CD8-positive, alpha-beta T cell (primary cell): ENCODE measurements at regions of chr9 and their contacts with region 1.

Region 1: GRCh38 chr9:132944302-132945185 is at the start of gene TSC1:
- DNase-seq: peak; percentile 96 to 99 (median 98)
- ATAC-seq: peak; percentile 83
- H3K4me3 ChIP-seq: peak within 1 kb of the TSS; percentile 98 to 99
- H3K4me3 Mint-ChIP-seq: peak within 1 kb of the TSS; percentile 97
- H3K27ac ChIP-seq: peak within 1 kb of the TSS; percentile 90 to 100
- H3K27ac Mint-ChIP-seq: peak within 1 kb of the TSS; percentile 100
- H3K4me1 ChIP-seq: peaks cover 17% of the 10 kb centered on the region
- H3K4me1 Mint-ChIP-seq: peaks cover 29% of the 10 kb centered on the region
- H3K27me3 ChIP-seq: no peaks in the 10 kb centered on the region
- H3K27me3 Mint-ChIP-seq: no peaks in the 10 kb centered on the region
- CTCF ChIP-seq: no peak
- total RNA-seq, gene TSC1: 45.6 to 51.1 TPM

Region 2: GRCh38 chr9:132804576-132805295 is 139.8 kb before region 1 on chr9:
- CTCF ChIA-PET with region 1: no interaction called
- POLR2A ChIA-PET with region 1: no interaction called
- intact Hi-C with region 1: no loop called
- DNase-seq: peak in 2 of 9 experiments; percentile 46 to 66
- ATAC-seq: no peak
- H3K4me3 ChIP-seq: no peak overlapping the region
- H3K4me3 Mint-ChIP-seq: no peak overlapping the region
- H3K27ac ChIP-seq: no peak overlapping the region
- H3K27ac Mint-ChIP-seq: no peak overlapping the region
- H3K4me1 ChIP-seq: no peaks in the 10 kb centered on the region
- H3K4me1 Mint-ChIP-seq: peaks cover 9% of the 10 kb centered on the region
- H3K27me3 ChIP-seq: peaks cover under 1 to 4% of the 10 kb centered on the region in 2 experiments
- H3K27me3 Mint-ChIP-seq: peaks cover 24% of the 10 kb centered on the region
- CTCF ChIP-seq: no peak

Region 3: GRCh38 chr9:132840980-132841379 is 103.6 kb before region 1 on chr9:
- CTCF ChIA-PET with region 1: no interaction called
- POLR2A ChIA-PET with region 1: no interaction called
- intact Hi-C with region 1: no loop called
- DNase-seq: no peak
- ATAC-seq: no peak
- H3K4me3 ChIP-seq: no peak overlapping the region
- H3K4me3 Mint-ChIP-seq: no peak overlapping the region
- H3K27ac ChIP-seq: no peak overlapping the region
- H3K27ac Mint-ChIP-seq: no peak overlapping the region
- H3K4me1 ChIP-seq: no peaks in the 10 kb centered on the region
- H3K4me1 Mint-ChIP-seq: no peaks in the 10 kb centered on the region
- H3K27me3 ChIP-seq: no peaks in the 10 kb centered on the region
- H3K27me3 Mint-ChIP-seq: no peaks in the 10 kb centered on the region
- CTCF ChIP-seq: no peak

Region 4: GRCh38 chr9:132877824-132878694 is 66.5 kb before region 1 on chr9 and contains the start of gene AK8:
- CTCF ChIA-PET with region 1: no interaction called
- POLR2A ChIA-PET with region 1: interaction called, 8 read pairs
- intact Hi-C with region 1: loop called in 1 of 2 experiments (anchors 1 kb)
- DNase-seq: peak; percentile 55 to 88 (median 73)
- ATAC-seq: peak; percentile 88
- H3K4me3 ChIP-seq: peak within 1 kb of the TSS; percentile 96 to 98
- H3K4me3 Mint-ChIP-seq: peak within 1 kb of the TSS; percentile 81
- H3K27ac ChIP-seq: peak within 1 kb of the TSS; percentile 63 to 73
- H3K27ac Mint-ChIP-seq: peak within 1 kb of the TSS; percentile 88
- H3K4me1 ChIP-seq: peaks cover 14% of the 10 kb centered on the region
- H3K4me1 Mint-ChIP-seq: peaks cover 17% of the 10 kb centered on the region
- H3K27me3 ChIP-seq: no peaks in the 10 kb centered on the region
- H3K27me3 Mint-ChIP-seq: no peaks in the 10 kb centered on the region
- CTCF ChIP-seq: no peak
- total RNA-seq, gene AK8: not detected

Region 5: GRCh38 chr9:133030317-133031129 is 86.0 kb after region 1 on chr9 and contains the start of gene GTF3C5:
- CTCF ChIA-PET with region 1: no interaction called
- POLR2A ChIA-PET with region 1: interaction called, 10 read pairs
- intact Hi-C with region 1: loop called in 1 of 2 experiments (anchors 2 kb)
- DNase-seq: peak; percentile 80 to 98 (median 91)
- ATAC-seq: peak; percentile 97
- H3K4me3 ChIP-seq: peak within 1 kb of the TSS; percentile 60 to 96
- H3K4me3 Mint-ChIP-seq: peak within 1 kb of the TSS; percentile 99
- H3K27ac ChIP-seq: peak within 1 kb of the TSS; percentile 75 to 94
- H3K27ac Mint-ChIP-seq: peak within 1 kb of the TSS; percentile 98
- H3K4me1 ChIP-seq: peaks cover 27% of the 10 kb centered on the region
- H3K4me1 Mint-ChIP-seq: peaks cover 54% of the 10 kb centered on the region
- H3K27me3 ChIP-seq: no peaks in the 10 kb centered on the region
- H3K27me3 Mint-ChIP-seq: no peaks in the 10 kb centered on the region
- CTCF ChIP-seq: no peak
- total RNA-seq, gene GTF3C5: 54.1 to 58.7 TPM

Region 6: DNA sequence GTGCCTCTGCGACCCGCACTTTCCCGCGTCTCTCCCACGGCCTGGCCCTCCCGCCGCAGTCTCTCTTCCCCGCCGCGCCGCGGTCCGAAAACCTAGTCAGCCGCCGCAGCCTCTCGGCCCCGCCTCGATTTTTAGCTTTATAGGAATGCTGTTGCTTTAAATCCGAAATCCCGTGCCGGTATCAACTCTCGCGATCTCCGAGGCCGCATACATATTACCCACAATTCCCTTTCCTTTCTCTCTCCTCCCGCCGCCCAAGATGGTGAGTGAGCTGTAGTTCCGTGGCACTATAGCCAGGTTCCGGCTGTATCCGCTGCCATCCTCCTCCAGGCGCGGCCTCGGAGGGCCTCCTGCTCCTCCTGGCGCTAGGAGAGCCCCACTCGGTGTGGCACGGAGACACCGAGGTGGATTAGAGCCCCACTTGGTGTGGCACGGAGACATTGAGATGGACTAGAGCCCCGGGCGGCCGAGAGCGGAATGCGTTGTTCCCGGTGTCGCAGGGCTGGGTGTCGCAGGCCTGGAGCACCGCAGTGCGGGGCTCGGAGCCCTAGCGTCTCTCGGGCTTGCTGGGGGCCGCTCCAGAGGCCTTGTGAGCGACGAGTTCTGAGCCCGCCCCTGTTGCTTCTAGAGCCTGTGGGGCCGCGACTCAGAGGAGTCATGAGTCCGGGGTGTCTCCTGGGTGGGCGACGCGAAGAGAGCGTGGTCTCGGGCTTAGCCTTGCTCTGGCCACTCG is 403.6 kb after region 1 on chr9 and contains the starts of genes MED22 and RPL7A:
- CTCF ChIA-PET with region 1: no interaction called
- POLR2A ChIA-PET with region 1: no interaction called
- intact Hi-C with region 1: loop called in 1 of 2 experiments (anchors 2 kb)
- DNase-seq: peak; percentile 80 to 97 (median 91)
- ATAC-seq: peak; percentile 85
- H3K4me3 ChIP-seq: peak within 1 kb of the TSS; percentile 95 to 100
- H3K4me3 Mint-ChIP-seq: peak within 1 kb of the TSS; percentile 100
- H3K27ac ChIP-seq: peak within 1 kb of the TSS; percentile 87 to 93
- H3K27ac Mint-ChIP-seq: peak within 1 kb of the TSS; percentile 98
- H3K4me1 ChIP-seq: peaks cover 23% of the 10 kb centered on the region
- H3K4me1 Mint-ChIP-seq: peaks cover 39% of the 10 kb centered on the region
- H3K27me3 ChIP-seq: no peaks in the 10 kb centered on the region
- H3K27me3 Mint-ChIP-seq: no peaks in the 10 kb centered on the region
- CTCF ChIP-seq: no peak
- total RNA-seq, gene MED22: 17.8 to 21.2 TPM
- total RNA-seq, gene RPL7A: 2,612 to 2,623 TPM

Region 7: DNA sequence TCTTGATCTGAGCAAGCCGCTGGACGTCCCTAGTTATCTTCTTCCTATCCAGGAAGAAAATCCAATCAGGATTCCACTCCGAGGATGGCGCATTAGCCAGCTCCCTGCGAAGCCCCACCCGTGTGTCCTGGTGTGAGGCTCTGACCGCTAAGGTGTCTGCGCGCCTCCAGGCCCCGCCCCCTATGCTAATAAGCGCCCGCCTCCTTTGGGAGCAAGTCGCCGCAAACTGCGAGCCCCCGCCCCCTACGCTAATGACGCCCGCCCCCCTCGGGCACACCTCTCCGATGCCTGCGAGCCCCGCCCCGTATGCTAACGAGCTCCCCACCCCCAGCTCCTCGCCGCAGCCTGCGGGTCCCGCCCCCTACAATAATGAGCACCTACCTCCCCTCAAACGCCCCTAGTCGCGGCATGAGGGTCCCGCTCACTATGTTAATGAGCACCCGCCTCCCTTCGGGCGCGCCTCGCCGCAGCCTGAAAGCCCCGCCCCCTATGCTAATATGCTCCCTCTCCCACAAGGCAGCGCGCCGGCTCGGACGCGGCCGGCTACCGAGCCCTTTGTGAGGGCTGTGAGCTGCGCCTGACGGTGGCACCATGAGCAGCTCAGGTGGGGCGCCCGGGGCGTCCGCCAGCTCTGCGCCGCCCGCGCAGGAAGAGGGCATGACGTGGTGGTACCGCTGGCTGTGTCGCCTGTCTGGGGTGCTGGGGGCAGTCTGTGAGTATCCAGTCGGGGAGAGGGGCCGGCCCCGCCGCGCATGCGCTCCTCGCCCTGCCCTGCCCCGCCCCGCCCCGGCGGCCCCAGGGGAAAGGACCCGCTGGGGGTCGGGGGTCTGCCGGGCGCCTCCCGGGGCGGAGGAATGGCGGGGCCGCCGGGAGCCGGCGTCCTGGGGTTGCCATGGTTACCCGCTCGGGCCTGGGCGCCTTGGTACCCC is 515.2 kb after region 1 on chr9 and contains the start of gene CACFD1:
- CTCF ChIA-PET with region 1: no interaction called
- POLR2A ChIA-PET with region 1: no interaction called
- intact Hi-C with region 1: loop called in 1 of 2 experiments (anchors 10 kb)
- DNase-seq: peak; percentile 77 to 96 (median 93)
- ATAC-seq: peak; percentile 80
- H3K4me3 ChIP-seq: peak within 1 kb of the TSS; percentile 71 to 76
- H3K4me3 Mint-ChIP-seq: peak within 1 kb of the TSS; percentile 87
- H3K27ac ChIP-seq: peak within 1 kb of the TSS; percentile 74 to 80
- H3K27ac Mint-ChIP-seq: peak within 1 kb of the TSS; percentile 97
- H3K4me1 ChIP-seq: peaks cover 14% of the 10 kb centered on the region
- H3K4me1 Mint-ChIP-seq: peaks cover 12% of the 10 kb centered on the region
- H3K27me3 ChIP-seq: no peaks in the 10 kb centered on the region
- H3K27me3 Mint-ChIP-seq: no peaks in the 10 kb centered on the region
- CTCF ChIP-seq: no peak
- total RNA-seq, gene CACFD1: 7.4 to 9.7 TPM

Region 8: DNA sequence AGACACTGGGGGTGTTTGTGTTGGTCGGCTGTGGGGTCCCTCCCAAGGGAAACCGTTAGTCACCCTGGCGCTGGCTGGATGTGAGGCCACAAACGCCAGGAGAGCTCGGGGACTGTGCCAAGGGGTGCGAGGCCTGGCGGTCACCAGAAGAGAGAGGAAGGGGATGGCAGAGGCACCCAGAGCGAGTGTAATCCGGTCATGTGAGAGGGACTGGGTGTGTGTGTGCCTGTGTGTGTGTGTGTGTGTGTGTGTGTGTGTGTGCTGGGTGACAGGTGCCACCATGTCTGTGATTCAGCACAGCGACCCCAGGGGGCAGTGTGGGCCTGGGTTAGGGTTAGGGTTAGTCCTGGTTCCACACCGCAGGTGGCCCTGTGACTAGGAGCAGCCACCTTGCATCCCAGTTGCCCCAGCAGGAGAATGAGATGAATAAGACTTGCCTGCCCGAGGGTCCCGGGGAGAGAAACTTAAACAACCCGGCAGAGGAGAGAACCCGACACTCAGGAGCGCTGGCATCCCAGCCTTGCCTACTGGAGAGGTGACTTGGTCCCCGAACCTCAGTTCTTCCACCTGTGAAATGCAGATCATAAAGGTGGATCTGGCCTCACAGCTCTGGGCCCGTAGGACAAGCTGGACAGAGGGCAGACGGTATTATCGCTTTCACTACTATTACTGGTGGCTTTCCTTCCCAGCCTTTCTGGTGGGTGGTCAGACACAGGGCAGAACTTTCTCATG is 588.6 kb after region 1 on chr9:
- CTCF ChIA-PET with region 1: no interaction called
- POLR2A ChIA-PET with region 1: no interaction called
- intact Hi-C with region 1: no loop called
- DNase-seq: peak; percentile 25 to 82 (median 67)
- ATAC-seq: peak; percentile 78
- H3K4me3 ChIP-seq: no peak overlapping the region
- H3K4me3 Mint-ChIP-seq: peak overlapping the region; percentile 42
- H3K27ac ChIP-seq: no peak overlapping the region
- H3K27ac Mint-ChIP-seq: peak overlapping the region; percentile 49
- H3K4me1 ChIP-seq: peaks cover 26% of the 10 kb centered on the region
- H3K4me1 Mint-ChIP-seq: peaks cover 13% of the 10 kb centered on the region
- H3K27me3 ChIP-seq: peaks cover 0 to 2% of the 10 kb centered on the region in 2 experiments
- H3K27me3 Mint-ChIP-seq: peaks cover 10% of the 10 kb centered on the region
- CTCF ChIP-seq: peak; percentile 48